AG04449 (cell line): ENCODE measurements at regions of chr7 and their contacts with region 1.

Region 1: DNA sequence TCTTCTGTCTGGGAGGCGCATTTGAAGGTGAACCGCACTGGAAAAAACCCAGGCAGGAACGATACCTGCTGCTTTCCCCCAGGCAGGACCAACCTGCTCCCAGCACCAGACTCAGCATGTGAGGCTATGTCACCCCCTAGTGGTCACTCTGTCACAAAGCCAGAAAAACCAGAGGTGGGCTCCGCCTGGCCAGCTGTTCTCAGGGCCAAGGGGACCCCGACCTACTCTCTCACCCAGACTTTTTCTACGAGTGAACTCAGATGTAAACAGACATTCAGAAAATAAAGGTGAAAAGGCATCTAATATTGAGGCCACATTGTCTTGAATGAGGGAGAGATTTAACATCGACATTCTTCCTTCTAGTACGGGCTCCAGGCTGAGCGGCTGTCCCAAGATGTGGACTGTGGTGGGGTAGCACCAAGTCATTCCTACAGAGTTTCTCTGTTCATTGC is 117.3 kb downstream of the PRKAG2 start:
- DNase-seq: no peak
- H3K4me3 ChIP-seq: no peak overlapping the region
- CTCF ChIP-seq: peak; percentile 86

Region 2: GRCh38 chr7:151368136-151368571 is 391.5 kb before region 1 on chr7:
- CTCF ChIA-PET with region 1: interaction called, 79 read pairs
- POLR2A ChIA-PET with region 1: no interaction called
- DNase-seq: no peak
- H3K4me3 ChIP-seq: no peak overlapping the region
- CTCF ChIP-seq: peak; percentile 95

Region 3: GRCh38 chr7:151484971-151485707 is 274.5 kb before region 1 on chr7:
- CTCF ChIA-PET with region 1: interaction called, 20 read pairs
- POLR2A ChIA-PET with region 1: no interaction called
- DNase-seq: no peak
- H3K4me3 ChIP-seq: no peak overlapping the region
- CTCF ChIP-seq: no peak

Region 4: DNA sequence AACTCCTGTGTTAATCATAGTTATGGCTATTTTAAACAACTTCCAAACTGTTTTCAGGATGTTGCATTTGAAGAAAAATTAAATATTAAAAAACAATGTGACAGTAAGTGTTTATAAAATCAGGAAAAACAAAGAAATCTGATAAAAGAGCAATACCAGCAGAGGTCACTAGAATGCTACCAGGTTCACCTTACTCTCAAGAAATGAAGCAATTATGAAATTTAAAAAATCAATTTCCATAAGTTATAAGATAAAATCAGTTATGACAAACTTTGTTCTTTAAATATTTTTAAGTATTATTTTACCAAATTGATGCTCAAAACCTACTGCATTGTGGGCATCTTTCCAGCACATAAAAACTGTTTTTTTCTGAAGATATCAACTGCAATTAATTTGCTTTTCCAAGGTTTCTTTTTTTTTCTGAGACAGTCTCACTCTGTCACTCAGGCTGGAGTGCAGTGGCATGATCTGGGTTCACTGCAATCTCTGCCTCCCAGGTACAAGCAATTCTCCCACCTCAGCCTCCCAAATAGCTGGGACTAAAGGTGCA is 189.2 kb before region 1 on chr7:
- CTCF ChIA-PET with region 1: interaction called, 270 read pairs
- POLR2A ChIA-PET with region 1: no interaction called
- DNase-seq: no peak
- H3K4me3 ChIP-seq: no peak overlapping the region
- CTCF ChIP-seq: peak; percentile 18

Region 5: DNA sequence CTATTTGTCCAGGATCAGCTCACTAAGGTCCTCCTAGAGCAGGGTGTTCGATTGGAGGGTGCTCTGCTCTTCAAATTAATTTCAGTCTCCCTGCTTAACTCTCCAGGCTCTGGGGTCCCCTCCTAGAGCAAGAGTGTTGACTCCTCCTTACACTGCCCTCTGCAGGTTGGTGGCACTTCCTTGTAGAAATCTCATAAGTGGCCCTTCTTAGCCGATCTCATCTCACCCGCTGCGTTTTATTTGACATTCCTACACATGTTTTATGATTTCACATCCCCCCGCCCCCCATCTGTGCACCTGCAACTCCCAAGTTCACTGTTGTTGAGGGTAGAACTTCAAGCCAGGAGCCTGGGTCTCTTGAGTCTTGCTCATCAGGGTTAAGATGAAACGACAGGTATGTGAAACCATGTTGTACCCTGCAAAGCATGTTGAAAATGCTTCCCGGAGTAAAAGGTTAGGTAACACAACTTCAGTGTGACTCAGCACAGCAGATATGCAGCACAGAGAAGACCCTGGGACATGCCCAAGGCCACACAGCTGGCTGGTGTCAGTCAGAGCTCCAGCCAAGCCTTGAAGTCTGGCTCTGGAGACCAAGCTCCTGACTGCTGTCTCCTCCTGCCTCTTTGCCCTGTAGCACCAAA is 53.9 kb before region 1 on chr7:
- CTCF ChIA-PET with region 1: interaction called, 13 read pairs
- POLR2A ChIA-PET with region 1: no interaction called
- DNase-seq: no peak
- H3K4me3 ChIP-seq: no peak overlapping the region
- CTCF ChIP-seq: peak; percentile 67

Region 6: GRCh38 chr7:151782598-151783448 is 23.2 kb after region 1 on chr7:
- CTCF ChIA-PET with region 1: interaction called, 31 read pairs
- POLR2A ChIA-PET with region 1: no interaction called
- DNase-seq: no peak
- H3K4me3 ChIP-seq: peak overlapping the region; percentile 42
- CTCF ChIP-seq: peak; percentile 90

Region 7: GRCh38 chr7:151890355-151891004 is 130.9 kb after region 1 on chr7:
- CTCF ChIA-PET with region 1: no interaction called
- POLR2A ChIA-PET with region 1: no interaction called
- DNase-seq: no peak
- H3K4me3 ChIP-seq: no peak overlapping the region
- CTCF ChIP-seq: no peak